ENCODE measurements at regions of chr6 and their contacts with region 1.

Region 1: GRCh38 chr6:83514866-83515466 is 2.6 kb downstream of the PRSS35 start:
- ATAC-seq: peak in 1 of 8 experiments; percentile 8
- H3K4me3 ChIP-seq: no peak overlapping the region
- H3K27ac ChIP-seq: no peak overlapping the region
- H3K4me1 ChIP-seq: no peaks in the 10 kb centered on the region

Region 2: GRCh38 chr6:83067448-83068413 is 447.2 kb before region 1 on chr6 and contains the start of gene DOP1A:
- in situ Hi-C with region 1: loop called in 1 of 9 experiments (anchors 25 kb)
- ATAC-seq: peak; percentile 85 to 90 (median 88)
- H3K4me3 ChIP-seq: peak within 1 kb of the TSS; percentile 58 to 90 (median 79)
- H3K27ac ChIP-seq: peak within 1 kb of the TSS; percentile 91 to 92
- H3K4me1 ChIP-seq: peaks cover 10 to 15% of the 10 kb centered on the region in 2 donors
- total RNA-seq, gene DOP1A: 15.2 to 36.8 (median 25.0) TPM

Region 3: GRCh38 chr6:83114164-83114563 is 400.8 kb before region 1 on chr6:
- in situ Hi-C with region 1: loop called in 1 of 9 experiments (anchors 25 kb)
- ATAC-seq: no peak
- H3K4me3 ChIP-seq: no peak overlapping the region
- H3K27ac ChIP-seq: no peak overlapping the region
- H3K4me1 ChIP-seq: no peaks in the 10 kb centered on the region

Region 4: DNA sequence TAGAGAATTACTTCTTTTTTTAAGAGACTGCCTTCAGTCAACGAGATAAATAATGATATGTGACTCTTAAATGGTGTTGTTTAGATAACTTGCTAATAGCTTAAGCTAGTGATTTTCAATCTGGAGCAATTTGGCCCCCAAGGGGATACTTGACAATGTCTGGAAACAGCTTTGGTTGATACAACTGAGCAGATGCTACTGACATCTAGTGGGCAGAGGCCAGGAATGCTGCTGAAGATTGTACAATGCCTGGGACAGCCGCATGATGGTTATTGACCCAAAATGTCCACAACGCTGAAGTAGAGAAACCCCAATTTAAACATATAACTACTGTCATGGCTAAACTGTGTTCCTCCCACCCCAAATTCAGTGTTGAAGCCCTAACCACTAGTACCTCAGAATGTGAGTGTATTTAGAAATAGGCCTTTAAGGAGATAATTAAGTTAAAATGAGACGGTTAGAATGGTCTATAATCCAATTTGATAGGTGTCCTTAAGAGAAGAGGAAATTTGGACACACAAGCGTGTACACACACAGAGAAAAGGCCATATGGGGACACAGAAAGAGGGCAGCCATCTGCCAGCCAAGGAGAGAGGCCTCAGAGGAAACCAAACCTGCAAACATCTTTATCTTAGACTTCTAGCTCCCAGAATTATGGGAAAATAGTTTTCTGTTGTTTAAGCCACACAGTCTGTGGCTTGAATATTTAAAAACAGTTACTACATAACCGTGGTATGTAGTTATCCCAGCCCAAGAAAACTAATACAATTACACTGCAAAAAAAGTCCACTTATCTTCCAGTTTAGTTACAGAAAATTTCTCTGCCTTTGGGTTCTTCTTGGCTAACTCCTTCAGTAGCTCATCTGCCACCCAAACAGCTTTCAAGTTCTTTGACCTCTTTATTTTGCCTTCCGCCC is 299.6 kb before region 1 on chr6:
- in situ Hi-C with region 1: loop called in 8 of 9 experiments (anchors 10 to 25 kb)
- ATAC-seq: peak; percentile 88 to 98 (median 96)
- H3K4me3 ChIP-seq: no peak overlapping the region
- H3K27ac ChIP-seq: no peak overlapping the region
- H3K4me1 ChIP-seq: peaks cover 0 to 5% of the 10 kb centered on the region in 2 donors

Region 5: GRCh38 chr6:83221889-83222479 is 293.0 kb before region 1 on chr6:
- in situ Hi-C with region 1: loop called in 8 of 9 experiments (anchors 10 to 25 kb)
- ATAC-seq: peak in 1 of 8 experiments; percentile 34
- H3K4me3 ChIP-seq: no peak overlapping the region
- H3K27ac ChIP-seq: no peak overlapping the region
- H3K4me1 ChIP-seq: no peaks in the 10 kb centered on the region

Region 6: DNA sequence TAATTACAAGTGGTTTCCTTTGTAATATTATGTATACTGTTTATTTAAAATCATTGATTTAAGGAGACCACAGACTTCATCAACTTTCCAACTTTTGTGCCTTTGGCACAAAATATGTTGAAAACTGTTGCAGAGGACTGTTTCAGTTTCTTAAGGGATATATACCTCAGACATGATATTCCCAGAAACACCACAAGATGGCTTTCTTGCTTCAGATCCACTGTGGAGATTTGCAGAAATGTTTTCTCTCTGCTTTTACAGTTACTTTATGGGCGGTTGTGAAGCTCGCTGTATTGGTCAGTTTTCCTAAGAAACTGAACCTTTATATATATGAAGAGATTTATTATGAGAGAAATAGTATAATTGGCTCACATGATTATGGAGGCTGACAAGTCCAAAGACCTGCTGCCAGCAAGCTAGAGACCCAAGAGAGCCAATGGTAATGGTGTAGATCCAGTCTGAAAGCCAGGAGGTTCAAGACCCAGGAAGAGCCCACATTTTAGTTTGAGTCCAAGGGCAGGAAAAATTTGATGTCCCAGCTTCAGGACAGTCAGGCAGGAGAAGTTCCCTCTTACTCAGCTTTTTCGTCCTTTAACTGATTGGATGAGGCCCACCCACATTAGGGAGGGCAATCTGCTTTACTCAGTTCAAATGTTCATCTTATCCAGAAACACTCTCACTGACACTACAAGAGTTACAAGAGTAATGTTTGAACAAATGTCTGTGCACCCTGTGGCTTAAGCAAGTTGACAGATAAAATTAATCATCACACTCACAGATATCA is 96.9 kb before region 1 on chr6:
- in situ Hi-C with region 1: loop called in 3 of 9 experiments (anchors 5 to 25 kb)
- ATAC-seq: peak in 5 of 8 experiments; percentile 35 to 81 (median 77)
- H3K4me3 ChIP-seq: no peak overlapping the region
- H3K27ac ChIP-seq: no peak overlapping the region
- H3K4me1 ChIP-seq: no peaks in the 10 kb centered on the region

Region 7: GRCh38 chr6:83424392-83425018 is 90.5 kb before region 1 on chr6:
- in situ Hi-C with region 1: loop called in 3 of 9 experiments (anchors 5 to 25 kb)
- ATAC-seq: no peak
- H3K4me3 ChIP-seq: no peak overlapping the region
- H3K27ac ChIP-seq: no peak overlapping the region
- H3K4me1 ChIP-seq: no peaks in the 10 kb centered on the region

Region 8: DNA sequence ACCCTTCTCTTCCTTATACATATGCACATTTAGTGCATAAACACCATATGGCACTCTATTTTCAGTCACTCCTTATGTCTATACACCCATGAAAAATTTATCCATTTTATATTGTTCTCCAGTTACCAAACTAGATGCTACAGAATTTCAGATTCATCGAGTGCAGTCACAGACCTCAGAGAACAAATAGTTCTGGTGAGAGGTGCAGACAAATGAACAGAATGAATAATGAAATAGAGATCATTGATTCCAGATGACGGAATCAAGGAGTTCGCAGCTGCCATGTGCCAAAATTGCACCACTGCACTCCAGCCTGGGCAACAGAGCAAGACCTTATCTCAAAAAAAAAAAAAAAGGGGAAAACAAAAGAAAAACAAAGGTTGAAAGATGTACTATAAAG is 927.2 kb after region 1 on chr6:
- in situ Hi-C with region 1: no loop called
- ATAC-seq: peak in 3 of 8 experiments; percentile 79 to 91 (median 84)
- H3K4me3 ChIP-seq: no peak overlapping the region
- H3K27ac ChIP-seq: no peak overlapping the region
- H3K4me1 ChIP-seq: no peaks in the 10 kb centered on the region